Gastrocnemius medialis (tissue), 4 donors: ENCODE measurements at regions of chr2 and their contacts with region 1.

Region 1: GRCh38 chr2:33134086-33134771 is 187.5 kb downstream of the LTBP1 start:
- DNase-seq: peak; percentile 65 to 72
- ATAC-seq: peak; percentile 91 to 93
- H3K4me3 ChIP-seq: peak overlapping the region; percentile 53 to 65 (median 58)
- H3K27ac ChIP-seq: peak overlapping the region; percentile 78 to 90 (median 86)
- H3K4me1 ChIP-seq: peaks cover 17 to 41% of the 10 kb centered on the region in 2 donors
- H3K27me3 ChIP-seq: no peaks in the 10 kb centered on the region
- CTCF ChIP-seq: peak in 1 of 5 experiments; percentile 10
- POLR2A ChIP-seq: peak; percentile 49 to 71

Region 2: GRCh38 chr2:32946314-32947075 is 187.7 kb before region 1 on chr2 and contains the start of gene LTBP1:
- in situ Hi-C with region 1: no loop called
- intact Hi-C with region 1: loop called (anchors 5 kb)
- DNase-seq: peak; percentile 54 to 61
- ATAC-seq: peak; percentile 82 to 84
- H3K4me3 ChIP-seq: peak within 1 kb of the TSS; percentile 71 to 83 (median 74)
- H3K27ac ChIP-seq: peak within 1 kb of the TSS; percentile 75 to 79 (median 78)
- H3K4me1 ChIP-seq: no peaks in the 10 kb centered on the region
- H3K27me3 ChIP-seq: no peaks in the 10 kb centered on the region
- CTCF ChIP-seq: peak; percentile 48 to 85 (median 65)
- POLR2A ChIP-seq: peak; percentile 62 to 74
- total RNA-seq, gene LTBP1: 8.0 to 42.8 (median 18.4) TPM

Region 3: DNA sequence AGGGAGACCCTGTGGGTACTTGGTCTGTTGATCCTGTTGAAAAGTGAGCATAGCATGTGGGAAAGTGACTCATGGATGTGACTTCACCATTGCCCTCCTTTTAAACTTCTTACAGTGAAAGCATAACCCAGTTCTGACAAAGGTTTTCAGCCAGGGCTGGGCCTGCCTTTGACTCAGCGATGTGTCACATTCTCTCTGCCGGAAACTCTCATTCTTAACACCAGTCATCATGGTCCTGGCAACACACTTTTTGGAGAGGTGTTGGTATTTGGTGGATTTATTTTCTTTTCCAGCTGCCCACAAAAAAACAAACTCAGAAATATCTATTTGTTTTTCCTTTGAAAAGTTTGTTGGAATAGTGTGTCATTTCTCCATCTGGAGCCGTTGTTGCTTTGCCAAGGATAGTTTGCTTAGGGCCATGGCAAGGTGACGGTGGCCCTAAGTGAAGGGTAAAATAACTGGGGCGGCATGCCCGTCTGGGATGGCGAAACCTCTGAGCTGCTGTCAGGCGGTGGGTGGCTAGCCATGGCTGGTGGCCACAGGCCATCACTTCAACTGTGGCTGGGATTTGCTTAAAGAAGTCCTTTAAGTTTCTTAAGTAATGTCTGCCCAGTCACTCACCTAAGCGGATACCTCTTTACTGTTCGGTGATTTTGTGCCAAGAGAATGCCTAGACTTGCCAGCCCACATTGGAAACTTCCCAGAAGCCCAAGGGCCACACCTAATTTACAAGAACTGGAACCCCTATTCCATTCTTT is 64.2 kb before region 1 on chr2:
- in situ Hi-C with region 1: no loop called
- intact Hi-C with region 1: loop called (anchors 1 kb)
- DNase-seq: peak; percentile 60 to 78
- ATAC-seq: peak; percentile 95 to 96
- H3K4me3 ChIP-seq: peak overlapping the region in 1 of 4 donors; percentile 4
- H3K27ac ChIP-seq: peak overlapping the region; percentile 64 to 82 (median 75)
- H3K4me1 ChIP-seq: peaks cover 22 to 28% of the 10 kb centered on the region in 2 donors
- H3K27me3 ChIP-seq: no peaks in the 10 kb centered on the region
- CTCF ChIP-seq: no peak
- POLR2A ChIP-seq: peak in 1 of 2 donors; percentile 28

Region 4: DNA sequence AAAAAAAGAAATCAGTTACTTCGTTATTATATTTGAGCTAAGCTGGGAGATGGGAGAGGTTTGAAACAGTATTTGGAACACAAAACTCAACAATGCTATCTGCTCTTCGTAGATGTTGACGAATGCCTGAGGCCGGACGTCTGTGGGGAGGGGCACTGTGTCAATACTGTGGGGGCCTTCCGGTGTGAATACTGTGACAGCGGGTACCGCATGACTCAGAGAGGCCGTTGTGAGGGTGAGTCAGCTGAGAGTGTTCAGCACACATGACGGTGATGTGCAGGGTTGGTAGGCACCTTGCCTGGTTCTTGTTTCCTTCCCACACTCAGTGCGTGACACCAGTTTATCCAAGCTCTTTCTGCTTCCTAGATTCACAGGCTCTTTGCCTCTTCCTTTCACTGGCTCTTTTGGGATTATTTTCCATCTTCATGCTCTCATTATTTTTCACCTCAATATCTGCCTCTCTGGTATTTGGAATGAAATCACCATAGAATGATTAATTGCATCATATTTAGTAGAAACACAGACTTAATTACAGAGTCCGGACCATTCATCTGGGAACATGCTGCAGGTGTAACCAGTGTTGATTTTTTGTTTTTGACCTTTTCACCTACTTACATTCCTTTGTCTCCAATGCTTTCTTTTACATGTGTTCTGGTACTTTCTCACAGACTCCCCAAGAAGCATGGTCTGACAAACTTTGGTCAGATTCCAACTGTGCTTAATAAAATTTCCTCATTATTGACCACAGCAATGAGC is 141.6 kb after region 1 on chr2:
- in situ Hi-C with region 1: no loop called
- intact Hi-C with region 1: loop called (anchors 2 kb)
- DNase-seq: peak; percentile 52 to 53
- ATAC-seq: peak; percentile 58 to 60
- H3K4me3 ChIP-seq: no peak overlapping the region
- H3K27ac ChIP-seq: peak overlapping the region; percentile 63 to 76 (median 70)
- H3K4me1 ChIP-seq: peaks cover 0 to 15% of the 10 kb centered on the region in 2 donors
- H3K27me3 ChIP-seq: no peaks in the 10 kb centered on the region
- CTCF ChIP-seq: no peak
- POLR2A ChIP-seq: peak; percentile 11 to 24

Region 5: DNA sequence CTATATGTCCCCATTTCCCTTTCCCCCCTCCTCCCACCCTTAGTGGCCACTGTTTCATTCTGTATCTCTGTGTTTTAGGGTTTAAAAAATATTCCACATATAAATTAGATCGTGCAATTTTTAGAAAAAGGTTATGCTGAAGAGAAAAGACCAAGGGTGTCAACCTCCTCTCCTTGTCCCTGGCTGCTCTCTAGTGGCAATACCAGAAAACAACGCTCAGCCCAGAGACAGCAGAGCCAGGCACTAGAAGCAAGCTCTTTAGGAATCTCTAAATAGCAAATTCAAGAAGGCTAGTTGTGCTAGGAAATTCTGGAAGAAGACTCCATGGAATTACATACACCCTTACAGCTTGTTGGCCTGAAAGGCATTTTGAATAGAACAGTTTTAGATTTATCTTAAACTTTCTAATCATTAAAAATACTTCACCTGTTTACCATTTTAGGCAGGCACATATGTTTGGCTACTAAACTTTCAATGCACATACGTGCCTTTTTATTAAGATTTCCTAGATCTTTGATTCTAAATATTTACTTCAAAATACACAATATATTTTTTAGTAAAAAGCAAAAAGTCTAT is 307.1 kb after region 1 on chr2:
- in situ Hi-C with region 1: no loop called
- intact Hi-C with region 1: loop called (anchors 5 kb)
- DNase-seq: peak; percentile 44 to 45
- ATAC-seq: peak; percentile 58 to 65
- H3K4me3 ChIP-seq: no peak overlapping the region
- H3K27ac ChIP-seq: peak overlapping the region in 3 of 4 donors; percentile 66 to 82 (median 78)
- H3K4me1 ChIP-seq: peaks cover 22 to 46% of the 10 kb centered on the region in 2 donors
- H3K27me3 ChIP-seq: no peaks in the 10 kb centered on the region
- CTCF ChIP-seq: peak; percentile 27 to 73 (median 46)
- POLR2A ChIP-seq: no peak